ENCODE measurements at regions of chr14 and their contacts with region 1.

Region 1: GRCh38 chr14:99192028-99192621 is 79.9 kb downstream of the BCL11B start:
- DNase-seq: peak in 3 of 9 experiments; percentile 55 to 75 (median 64)
- ATAC-seq: peak; percentile 38
- H3K4me3 ChIP-seq: peak overlapping the region; percentile 36 to 44
- H3K4me3 Mint-ChIP-seq: peak overlapping the region; percentile 87
- H3K27ac ChIP-seq: peak overlapping the region; percentile 71 to 76
- H3K27ac Mint-ChIP-seq: peak overlapping the region; percentile 99
- H3K4me1 ChIP-seq: peaks cover 97% of the 10 kb centered on the region
- H3K4me1 Mint-ChIP-seq: peaks cover 96% of the 10 kb centered on the region
- H3K27me3 ChIP-seq: no peaks in the 10 kb centered on the region
- H3K27me3 Mint-ChIP-seq: no peaks in the 10 kb centered on the region
- CTCF ChIP-seq: no peak

Region 2: DNA sequence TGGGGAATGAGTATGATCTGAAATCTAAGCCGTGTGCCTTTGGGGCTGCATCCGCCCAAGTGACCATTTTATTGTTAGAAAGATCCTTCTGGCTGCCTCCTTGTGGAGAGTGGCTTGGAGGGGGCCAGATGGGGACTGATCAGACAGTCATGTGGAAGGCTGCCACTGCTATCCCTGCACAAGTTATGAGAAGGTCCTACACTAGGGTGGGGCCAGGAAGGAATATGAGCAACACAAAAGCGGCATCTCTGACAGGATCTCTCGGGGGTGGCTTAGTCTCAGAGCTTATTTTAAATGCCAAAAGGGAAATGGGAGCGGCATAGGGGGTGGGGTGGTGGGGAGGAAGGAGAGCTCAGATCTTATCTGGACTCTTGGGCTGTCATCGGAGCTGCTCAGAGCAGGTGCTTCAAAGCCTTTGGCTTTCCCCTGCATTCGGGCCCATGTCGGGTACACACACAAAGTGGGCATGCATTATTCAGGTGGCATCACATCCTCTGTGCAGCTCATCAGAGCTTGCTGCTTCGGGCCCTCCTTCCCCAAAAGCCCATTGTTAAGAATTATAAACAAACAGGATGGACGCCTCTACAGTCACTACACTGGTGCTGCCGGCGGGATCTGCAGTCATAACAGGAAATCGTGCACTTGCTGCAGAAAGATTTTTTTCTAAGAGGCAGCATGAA is 1589.5 kb before region 1 on chr14:
- CTCF ChIA-PET with region 1: no interaction called
- POLR2A ChIA-PET with region 1: interaction called, 9 read pairs
- intact Hi-C with region 1: loop called in 1 of 2 experiments (anchors 10 kb)
- DNase-seq: peak; percentile 61 to 91 (median 80)
- ATAC-seq: peak; percentile 90
- H3K4me3 ChIP-seq: peak overlapping the region; percentile 19 to 21
- H3K4me3 Mint-ChIP-seq: no peak overlapping the region
- H3K27ac ChIP-seq: peak overlapping the region; percentile 66 to 84
- H3K27ac Mint-ChIP-seq: no peak overlapping the region
- H3K4me1 ChIP-seq: peaks cover 45% of the 10 kb centered on the region
- H3K4me1 Mint-ChIP-seq: peaks cover 38% of the 10 kb centered on the region
- H3K27me3 ChIP-seq: no peaks in the 10 kb centered on the region
- H3K27me3 Mint-ChIP-seq: no peaks in the 10 kb centered on the region
- CTCF ChIP-seq: no peak

Region 3: GRCh38 chr14:99177886-99178835 is 14.0 kb before region 1 on chr14:
- CTCF ChIA-PET with region 1: interaction called, 11 read pairs
- POLR2A ChIA-PET with region 1: interaction called, 9 read pairs
- intact Hi-C with region 1: no loop called
- DNase-seq: peak in 1 of 9 experiments; percentile 47
- ATAC-seq: no peak
- H3K4me3 ChIP-seq: no peak overlapping the region
- H3K4me3 Mint-ChIP-seq: peak overlapping the region; percentile 69
- H3K27ac ChIP-seq: peak overlapping the region; percentile 18 to 55
- H3K27ac Mint-ChIP-seq: peak overlapping the region; percentile 92
- H3K4me1 ChIP-seq: peaks cover 62% of the 10 kb centered on the region
- H3K4me1 Mint-ChIP-seq: peaks cover 61% of the 10 kb centered on the region
- H3K27me3 ChIP-seq: no peaks in the 10 kb centered on the region
- H3K27me3 Mint-ChIP-seq: no peaks in the 10 kb centered on the region
- CTCF ChIP-seq: no peak

Region 4: DNA sequence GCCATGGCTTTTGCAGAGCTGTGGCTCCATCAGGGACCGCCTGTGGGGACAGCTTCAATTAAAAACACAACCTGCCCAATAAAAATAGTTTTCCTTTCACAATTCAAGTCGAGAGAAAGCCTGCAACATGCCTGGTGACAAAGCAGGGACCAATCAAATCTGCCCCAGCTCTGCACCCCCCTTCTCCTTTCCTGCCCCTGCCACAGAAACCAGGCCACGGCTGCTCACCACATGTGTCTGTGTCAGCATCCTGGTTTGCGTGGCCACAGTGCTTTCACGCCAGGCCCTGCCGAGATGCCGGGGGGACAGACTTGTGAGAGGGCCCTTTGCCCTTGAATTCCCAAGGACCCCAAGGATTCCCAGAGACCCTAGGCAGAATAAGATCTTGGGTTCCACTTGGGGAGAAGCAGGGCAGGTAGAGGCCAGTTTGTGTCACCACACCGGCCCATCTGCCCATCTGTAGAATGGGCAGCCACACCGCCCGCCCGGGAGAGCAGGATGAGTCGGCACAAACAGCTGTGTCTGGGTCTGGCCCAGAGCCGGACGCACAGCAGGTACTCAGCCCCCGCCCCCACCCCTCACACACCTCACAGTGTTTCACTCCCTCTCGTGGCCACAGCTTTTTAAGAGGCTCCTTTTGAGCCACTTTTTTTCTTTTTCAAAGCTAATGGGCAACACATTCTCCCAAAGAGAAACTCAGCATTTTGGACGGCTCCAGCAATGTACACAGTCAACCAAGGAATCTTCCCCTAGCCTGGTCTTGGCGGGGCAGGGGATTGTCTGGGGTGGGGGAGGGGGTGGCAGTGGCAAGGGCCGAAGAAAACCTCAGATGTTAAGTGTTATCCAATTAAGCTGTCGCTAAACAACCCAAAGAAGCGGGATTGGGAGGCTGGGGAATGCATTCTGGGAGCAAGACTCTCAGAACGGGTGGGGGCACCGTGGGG is 38.4 kb after region 1 on chr14:
- CTCF ChIA-PET with region 1: interaction called, 21 read pairs
- POLR2A ChIA-PET with region 1: interaction called, 2,179 read pairs
- intact Hi-C with region 1: loop called (anchors 2 kb)
- DNase-seq: peak; percentile 73 to 95 (median 85)
- ATAC-seq: peak; percentile 62
- H3K4me3 ChIP-seq: peak overlapping the region; percentile 16 to 23
- H3K4me3 Mint-ChIP-seq: peak overlapping the region; percentile 75
- H3K27ac ChIP-seq: peak overlapping the region; percentile 60 to 96
- H3K27ac Mint-ChIP-seq: peak overlapping the region; percentile 99
- H3K4me1 ChIP-seq: peaks cover 99% of the 10 kb centered on the region
- H3K4me1 Mint-ChIP-seq: peaks cover 95% of the 10 kb centered on the region
- H3K27me3 ChIP-seq: no peaks in the 10 kb centered on the region
- H3K27me3 Mint-ChIP-seq: no peaks in the 10 kb centered on the region
- CTCF ChIP-seq: peak; percentile 46